ENCODE measurements at regions of chrX and their contacts with region 1.

Region 1: DNA sequence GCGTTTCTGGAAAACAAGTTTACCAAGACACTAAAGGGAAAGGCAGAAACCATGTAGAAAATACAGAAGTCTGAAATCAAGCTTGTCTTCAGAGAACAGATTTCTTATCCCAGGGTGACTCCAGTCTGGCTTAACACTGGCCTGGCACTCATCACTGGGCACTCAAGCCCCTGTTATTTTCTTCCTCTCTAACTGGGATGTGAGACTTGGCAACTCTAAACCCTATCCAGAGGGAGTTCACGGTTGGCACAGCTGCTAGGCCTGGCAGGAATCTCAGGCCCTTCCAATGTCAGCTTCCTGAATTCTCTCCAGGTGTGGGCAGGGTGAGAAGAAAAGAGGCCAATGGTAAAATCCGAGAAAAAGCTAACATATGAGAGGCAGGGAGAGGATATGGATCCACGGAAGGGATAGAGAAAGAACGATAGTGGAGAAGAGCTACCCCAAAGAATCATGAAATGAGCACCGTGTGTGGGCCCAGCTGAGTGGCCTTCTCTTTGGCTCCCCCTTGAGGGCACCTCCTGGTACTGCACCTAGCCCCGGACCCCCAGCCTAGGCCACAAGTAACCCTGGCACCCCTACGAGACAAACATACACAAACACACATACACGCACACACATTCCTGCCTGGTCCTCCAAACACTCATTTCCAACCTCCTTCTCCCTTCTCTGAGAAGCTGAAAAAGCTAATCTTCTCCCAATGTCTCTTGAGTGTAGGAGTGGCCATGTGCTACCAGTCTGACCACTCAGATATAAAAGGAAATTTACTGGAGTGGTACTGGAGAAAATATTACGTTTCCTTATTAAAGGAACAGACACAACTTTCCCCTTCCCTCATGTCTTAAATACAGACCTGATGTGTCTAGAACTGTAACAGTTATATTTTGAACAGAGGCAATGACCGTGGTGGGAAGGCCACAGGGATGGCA is 16.6 kb upstream of the PTCHD1 start:
- DNase-seq: no peak
- ATAC-seq: peak; percentile 86
- H3K4me3 ChIP-seq: no peak overlapping the region
- H3K27ac ChIP-seq: no peak overlapping the region
- H3K4me1 ChIP-seq: no peaks in the 10 kb centered on the region
- H3K27me3 ChIP-seq: no peaks in the 10 kb centered on the region
- CTCF ChIP-seq: peak; percentile 39 to 84 (median 73); a peak in 5 of 6 replicates
- POLR2A ChIP-seq: no peak
- RAD21 ChIP-seq: peak; percentile 59

Region 2: GRCh38 chrX:23008431-23009099 is 309.5 kb before region 1 on chrX:
- CTCF ChIA-PET with region 1: interaction called, 7 read pairs
- POLR2A ChIA-PET with region 1: no interaction called
- RAD21 ChIA-PET with region 1: no interaction called
- intact Hi-C with region 1: loop called (anchors 1 kb)
- DNase-seq: peak; percentile 6
- ATAC-seq: peak; percentile 58
- H3K4me3 ChIP-seq: no peak overlapping the region
- H3K27ac ChIP-seq: no peak overlapping the region
- H3K4me1 ChIP-seq: no peaks in the 10 kb centered on the region
- H3K27me3 ChIP-seq: no peaks in the 10 kb centered on the region
- CTCF ChIP-seq: peak; percentile 19 to 52 (median 52); a peak in 4 of 6 replicates
- POLR2A ChIP-seq: no peak
- RAD21 ChIP-seq: peak; percentile 57; the same call in 1 of the 2 replicates

Measured in HCT116 (cell line).